Activated CD4-positive, alpha-beta T cell treated with anti-CD3 and anti-CD28 coated beads for 36 hours (primary cell): ENCODE measurements at regions of chr20 and their contacts with region 1.

Region 1: DNA sequence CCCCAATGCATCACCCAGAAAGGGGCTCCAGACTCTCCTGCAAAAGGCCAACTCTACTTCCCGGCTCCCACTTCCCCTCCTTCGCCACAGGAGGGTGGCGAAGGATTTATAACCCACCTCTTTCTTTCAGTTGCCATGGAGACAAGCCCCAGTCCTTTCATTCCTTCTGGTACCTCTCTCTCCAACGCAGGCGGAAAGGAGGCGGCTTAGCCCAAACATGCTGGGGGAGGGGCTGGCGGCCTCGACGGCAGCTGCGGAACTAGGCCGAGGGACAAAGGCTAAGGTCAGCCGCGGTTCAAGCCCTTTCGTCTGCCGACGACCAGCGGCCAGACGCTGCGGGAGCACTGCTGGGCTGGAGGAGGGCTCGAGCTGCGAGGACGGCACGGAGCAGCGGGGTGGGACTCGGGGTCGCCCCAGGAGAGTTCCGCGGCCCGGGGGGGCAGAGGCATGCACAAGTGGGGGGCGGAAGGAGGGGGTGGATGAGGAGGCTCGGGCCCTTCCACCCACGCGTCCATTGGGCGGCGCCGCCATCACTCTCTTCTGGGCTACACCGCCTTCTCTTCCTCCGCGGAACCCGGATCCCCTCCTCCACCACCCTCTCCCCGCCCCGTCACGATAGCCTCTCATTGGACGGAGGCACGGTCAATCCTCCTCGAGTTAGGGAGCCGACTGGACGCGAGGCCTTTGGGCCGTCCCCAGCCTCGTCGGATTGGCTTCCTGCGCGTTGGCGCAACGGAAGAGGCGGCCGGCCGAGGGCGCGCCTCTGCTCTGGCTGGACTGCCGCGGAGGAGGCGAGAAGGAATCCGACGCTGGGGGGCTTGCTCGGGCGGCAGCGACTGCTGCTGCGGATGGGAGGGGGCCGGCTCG is at the start of gene PANK2:
- DNase-seq: peak; percentile 98
- ATAC-seq: peak; percentile 99
- H3K4me3 Mint-ChIP-seq: peak within 1 kb of the TSS; percentile 95
- H3K27ac Mint-ChIP-seq: peak within 1 kb of the TSS; percentile 93
- H3K4me1 Mint-ChIP-seq: peaks cover 46% of the 10 kb centered on the region
- H3K27me3 Mint-ChIP-seq: no peaks in the 10 kb centered on the region
- total RNA-seq, gene PANK2: 37.2 to 50.2 TPM

Region 2: GRCh38 chr20:3727401-3728021 is 161.3 kb before region 1 on chr20:
- CTCF ChIA-PET with region 1: no interaction called
- POLR2A ChIA-PET with region 1: no interaction called
- intact Hi-C with region 1: no loop called
- DNase-seq: no peak
- ATAC-seq: no peak
- H3K4me3 Mint-ChIP-seq: no peak overlapping the region
- H3K27ac Mint-ChIP-seq: no peak overlapping the region
- H3K4me1 Mint-ChIP-seq: no peaks in the 10 kb centered on the region
- H3K27me3 Mint-ChIP-seq: peaks cover 38% of the 10 kb centered on the region

Region 3: DNA sequence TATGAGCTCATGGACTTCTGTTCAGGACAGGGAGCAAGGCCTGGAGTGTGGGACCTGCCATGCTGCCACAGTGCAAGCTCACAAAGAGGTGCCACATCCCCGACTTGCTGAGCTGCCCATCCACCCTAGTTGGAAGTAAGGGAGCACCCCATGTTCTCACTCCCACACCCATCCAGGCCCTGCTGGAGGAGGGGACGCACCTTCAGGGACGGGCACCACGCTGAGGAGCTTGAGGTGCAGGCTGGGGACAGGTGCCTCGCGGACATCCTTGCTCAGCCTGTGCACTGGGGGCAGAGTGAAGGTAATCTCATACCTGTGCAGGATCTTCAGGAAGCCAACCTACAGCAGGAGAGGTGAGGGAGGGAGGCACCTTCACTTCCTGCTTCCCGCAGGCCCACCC is 133.6 kb before region 1 on chr20:
- CTCF ChIA-PET with region 1: no interaction called
- POLR2A ChIA-PET with region 1: no interaction called
- intact Hi-C with region 1: no loop called
- DNase-seq: no peak
- ATAC-seq: no peak
- H3K4me3 Mint-ChIP-seq: no peak overlapping the region
- H3K27ac Mint-ChIP-seq: no peak overlapping the region
- H3K4me1 Mint-ChIP-seq: peaks cover 7% of the 10 kb centered on the region
- H3K27me3 Mint-ChIP-seq: peaks cover 3% of the 10 kb centered on the region

Region 4: DNA sequence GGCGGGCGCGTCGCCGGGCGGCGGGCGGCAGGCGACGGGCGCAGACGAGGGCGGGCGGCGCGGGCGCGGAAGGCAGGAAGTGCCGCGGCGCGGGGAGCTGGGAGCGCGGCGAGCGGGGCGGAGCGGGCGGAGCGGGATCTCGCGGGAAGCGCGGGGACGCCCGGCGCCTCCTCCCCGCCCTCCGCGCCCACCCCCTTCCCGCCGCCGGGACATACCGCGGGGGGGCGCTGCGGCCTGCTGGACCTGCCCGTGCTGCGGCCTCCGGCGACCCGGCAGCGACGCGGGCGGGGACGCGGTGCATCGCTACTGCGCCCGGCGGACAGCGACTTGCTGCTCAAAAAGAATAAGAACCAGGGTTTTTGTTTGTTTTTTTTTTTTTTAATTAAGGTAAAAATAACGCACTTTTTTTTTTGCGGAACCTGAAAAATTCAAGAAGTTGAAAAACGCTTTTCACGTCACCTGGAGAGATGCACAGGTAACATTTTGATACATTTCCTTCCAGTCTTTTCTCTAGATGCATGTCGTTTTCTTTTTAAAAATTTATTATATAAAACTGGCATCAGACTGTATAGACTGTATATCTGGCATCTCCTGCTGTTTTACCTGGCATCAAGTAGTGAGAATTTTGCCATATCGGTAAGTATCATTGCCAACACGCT is 102.1 kb before region 1 on chr20 and contains the start of gene CENPB:
- CTCF ChIA-PET with region 1: interaction called, 3 read pairs
- POLR2A ChIA-PET with region 1: interaction called, 6 read pairs
- intact Hi-C with region 1: loop called in 1 of 2 experiments (anchors 2 kb)
- DNase-seq: peak; percentile 95
- ATAC-seq: peak; percentile 89
- H3K4me3 Mint-ChIP-seq: peak within 1 kb of the TSS; percentile 77
- H3K27ac Mint-ChIP-seq: peak within 1 kb of the TSS; percentile 84
- H3K4me1 Mint-ChIP-seq: peaks cover 39% of the 10 kb centered on the region
- H3K27me3 Mint-ChIP-seq: no peaks in the 10 kb centered on the region
- total RNA-seq, gene CENPB: 46.2 to 48.3 TPM

Region 5: GRCh38 chr20:3811467-3812258 is 77.2 kb before region 1 on chr20:
- CTCF ChIA-PET with region 1: no interaction called
- POLR2A ChIA-PET with region 1: interaction called, 5 read pairs
- intact Hi-C with region 1: loop called in 1 of 2 experiments (anchors 1 kb)
- DNase-seq: peak; percentile 97
- ATAC-seq: peak; percentile 92
- H3K4me3 Mint-ChIP-seq: peak overlapping the region; percentile 78
- H3K27ac Mint-ChIP-seq: peak overlapping the region; percentile 96
- H3K4me1 Mint-ChIP-seq: peaks cover 78% of the 10 kb centered on the region
- H3K27me3 Mint-ChIP-seq: no peaks in the 10 kb centered on the region

Region 6: GRCh38 chr20:3846740-3847428 is 42.0 kb before region 1 on chr20 and contains the start of gene MAVS:
- CTCF ChIA-PET with region 1: no interaction called
- POLR2A ChIA-PET with region 1: no interaction called
- intact Hi-C with region 1: loop called in 1 of 2 experiments (anchors 1 kb)
- DNase-seq: peak; percentile 91
- ATAC-seq: peak; percentile 98
- H3K4me3 Mint-ChIP-seq: peak within 1 kb of the TSS; percentile 88
- H3K27ac Mint-ChIP-seq: peak within 1 kb of the TSS; percentile 84
- H3K4me1 Mint-ChIP-seq: peaks cover 22% of the 10 kb centered on the region
- H3K27me3 Mint-ChIP-seq: no peaks in the 10 kb centered on the region
- total RNA-seq, gene MAVS: 23.2 to 25.9 TPM

Region 7: GRCh38 chr20:3980260-3981131 is 91.6 kb after region 1 on chr20:
- CTCF ChIA-PET with region 1: no interaction called
- POLR2A ChIA-PET with region 1: no interaction called
- intact Hi-C with region 1: loop called in 1 of 2 experiments (anchors 5 kb)
- DNase-seq: peak; percentile 65
- ATAC-seq: peak; percentile 93
- H3K4me3 Mint-ChIP-seq: peak overlapping the region; percentile 24
- H3K27ac Mint-ChIP-seq: peak overlapping the region; percentile 83
- H3K4me1 Mint-ChIP-seq: peaks cover 21% of the 10 kb centered on the region
- H3K27me3 Mint-ChIP-seq: no peaks in the 10 kb centered on the region

Region 8: GRCh38 chr20:4091490-4092479 is 202.9 kb after region 1 on chr20:
- CTCF ChIA-PET with region 1: no interaction called
- POLR2A ChIA-PET with region 1: no interaction called
- intact Hi-C with region 1: loop called in 1 of 2 experiments (anchors 5 kb)
- DNase-seq: peak; percentile 67
- ATAC-seq: peak; percentile 70
- H3K4me3 Mint-ChIP-seq: no peak overlapping the region
- H3K27ac Mint-ChIP-seq: no peak overlapping the region
- H3K4me1 Mint-ChIP-seq: peaks cover 3% of the 10 kb centered on the region
- H3K27me3 Mint-ChIP-seq: peaks cover 8% of the 10 kb centered on the region